Gastrocnemius medialis (tissue), 4 donors: ENCODE measurements at regions of chr20 and their contacts with region 1.

Region 1: DNA sequence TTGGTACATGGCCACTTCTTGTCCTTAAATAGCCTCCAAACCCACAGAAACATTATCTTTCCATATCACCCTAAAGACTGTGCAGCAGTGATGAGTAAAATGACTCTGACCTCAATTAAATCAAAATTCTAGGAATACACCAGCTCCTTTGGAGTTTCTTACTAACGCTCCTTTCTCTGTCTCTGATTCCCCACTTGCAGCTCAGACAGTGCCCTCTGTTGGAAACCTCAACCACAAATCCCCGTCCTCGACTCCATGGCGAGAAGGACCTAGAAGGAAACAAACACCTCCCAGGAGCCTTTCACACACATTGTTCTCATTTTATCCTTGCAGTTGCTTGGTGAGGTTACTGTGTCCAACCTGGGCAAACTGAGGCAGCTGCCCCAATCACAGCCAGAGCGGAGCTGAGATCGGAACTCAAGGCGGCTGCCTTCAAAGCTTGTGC is 17.7 kb upstream of the PARD6B start:
- DNase-seq: no peak
- ATAC-seq: no peak
- H3K4me3 ChIP-seq: no peak overlapping the region
- H3K27ac ChIP-seq: no peak overlapping the region
- H3K4me1 ChIP-seq: peaks cover 0 to 17% of the 10 kb centered on the region in 2 donors
- H3K27me3 ChIP-seq: no peaks in the 10 kb centered on the region
- CTCF ChIP-seq: peak in 3 of 5 experiments; percentile 16 to 38 (median 34)
- POLR2A ChIP-seq: no peak

Region 2: GRCh38 chr20:50625986-50626677 is 87.5 kb before region 1 on chr20:
- in situ Hi-C with region 1: no loop called
- intact Hi-C with region 1: loop called (anchors 1 kb)
- DNase-seq: peak; percentile 53 to 76
- ATAC-seq: peak; percentile 69 to 85
- H3K4me3 ChIP-seq: no peak overlapping the region
- H3K27ac ChIP-seq: peak overlapping the region; percentile 53 to 65 (median 60)
- H3K4me1 ChIP-seq: peaks cover 9 to 13% of the 10 kb centered on the region in 2 donors
- H3K27me3 ChIP-seq: no peaks in the 10 kb centered on the region
- CTCF ChIP-seq: peak in 4 of 5 experiments; percentile 55 to 64 (median 60)
- POLR2A ChIP-seq: no peak

Region 3: GRCh38 chr20:50663095-50663850 is 50.4 kb before region 1 on chr20:
- in situ Hi-C with region 1: no loop called
- intact Hi-C with region 1: loop called (anchors 5 kb)
- DNase-seq: no peak
- ATAC-seq: peak; percentile 33 to 43
- H3K4me3 ChIP-seq: no peak overlapping the region
- H3K27ac ChIP-seq: peak overlapping the region; percentile 70 to 79 (median 75)
- H3K4me1 ChIP-seq: peaks cover 19 to 30% of the 10 kb centered on the region in 2 donors
- H3K27me3 ChIP-seq: no peaks in the 10 kb centered on the region
- CTCF ChIP-seq: peak in 4 of 5 experiments; percentile 15 to 39 (median 28)
- POLR2A ChIP-seq: no peak